Left cardiac atrium (tissue), 4 donors: ENCODE measurements at regions of chr7 and their contacts with region 1.

Region 1: GRCh38 chr7:148699782-148700629 is 1.3 kb downstream of the CUL1 start:
- DNase-seq: no peak
- ATAC-seq: peak in 1 of 2 donors; percentile 4

Region 2: GRCh38 chr7:148652773-148653172 is 47.2 kb before region 1 on chr7:
- intact Hi-C with region 1: no loop called
- DNase-seq: no peak
- ATAC-seq: no peak

Region 3: DNA sequence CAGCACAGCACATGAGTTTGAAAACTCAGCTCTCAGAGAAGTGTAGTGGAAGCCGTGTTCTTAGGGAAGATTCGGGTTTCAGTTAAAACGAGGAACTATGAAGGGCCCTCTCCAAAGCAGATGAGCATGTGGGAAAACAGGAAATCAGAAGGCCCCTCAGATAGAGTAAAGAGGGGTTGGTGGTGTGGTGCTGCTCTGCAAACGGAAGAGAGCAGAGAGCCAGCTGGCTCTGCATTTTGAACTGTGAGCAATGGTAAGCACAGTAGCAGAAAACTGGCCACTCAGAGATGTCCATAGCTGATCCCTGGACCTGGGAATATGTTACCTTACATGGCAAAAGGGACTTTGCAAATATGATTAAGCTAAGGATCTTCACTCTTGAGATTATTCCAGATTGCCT is 29.2 kb before region 1 on chr7:
- intact Hi-C with region 1: no loop called
- DNase-seq: no peak
- ATAC-seq: no peak

Region 4: DNA sequence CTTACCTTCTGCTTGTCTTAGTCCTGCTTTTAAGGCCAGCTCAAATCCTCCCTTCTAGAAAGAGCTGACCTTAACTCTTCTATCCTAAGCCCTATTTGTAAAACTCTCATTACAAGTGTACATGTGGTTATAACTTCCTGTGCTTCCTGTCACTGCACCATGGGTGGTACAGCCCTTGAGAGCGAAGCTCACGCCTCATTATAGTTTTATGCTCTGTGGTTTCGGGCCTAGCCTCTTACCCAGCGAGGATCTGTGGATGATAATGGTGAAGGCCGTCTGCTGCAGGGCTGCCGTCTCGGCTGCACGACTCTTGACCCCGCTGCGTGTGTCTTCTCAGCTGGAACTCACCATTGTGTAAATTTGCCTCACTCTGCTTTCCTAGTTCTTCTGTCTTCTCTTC is 73.3 kb after region 1 on chr7:
- intact Hi-C with region 1: loop called in 1 of 2 experiments (anchors 10 kb)
- DNase-seq: no peak
- ATAC-seq: no peak